Endothelial cell of umbilical vein (primary cell): ENCODE measurements at regions of chr2 and their contacts with region 1.

Region 1: DNA sequence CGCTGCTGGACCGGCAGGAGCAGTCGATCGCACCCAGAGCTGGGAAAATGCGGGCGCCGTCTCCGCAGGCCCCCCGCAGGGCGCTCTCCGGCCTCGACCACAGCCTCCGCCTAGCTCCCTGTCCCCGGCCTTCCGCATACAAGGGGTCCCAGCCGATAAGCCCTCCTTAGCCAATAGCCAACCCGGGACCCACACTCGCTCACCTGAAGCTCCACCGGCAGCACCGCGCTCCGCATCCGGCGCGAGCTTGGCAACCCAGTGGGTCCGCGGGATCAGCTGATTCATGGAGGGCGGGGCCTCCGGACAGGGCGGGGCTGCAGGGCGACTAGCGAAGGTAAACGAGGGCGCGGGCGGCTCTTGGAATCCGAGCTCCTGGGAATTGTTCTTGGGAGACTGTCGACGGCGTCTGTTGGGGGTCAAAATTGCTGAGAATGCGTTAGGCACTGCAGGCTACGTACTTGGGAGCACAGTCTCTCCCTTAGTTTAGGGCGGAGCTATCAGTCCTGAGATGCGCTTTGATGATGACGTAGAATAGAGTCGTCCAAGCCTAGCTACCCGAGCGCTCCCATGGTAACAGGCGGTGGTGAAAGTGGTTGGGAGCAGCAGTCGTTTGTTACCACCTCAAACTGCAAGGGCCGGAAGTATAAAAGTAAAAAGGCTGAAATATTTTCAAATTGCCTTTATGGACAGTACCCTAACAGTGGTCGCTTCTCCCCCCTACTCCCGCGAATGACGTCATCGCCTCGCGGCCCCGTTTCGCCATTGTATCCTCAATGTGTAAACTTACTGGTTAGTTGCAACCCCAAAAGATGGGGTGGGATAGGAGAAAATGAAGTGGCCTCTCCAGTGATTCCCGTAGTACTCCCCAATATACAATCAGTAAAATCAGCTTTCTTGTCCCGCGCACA is at the start of gene ALS2:
- DNase-seq: peak; percentile 99
- H3K4me3 ChIP-seq: peak within 1 kb of the TSS; percentile 49 to 90 (median 79)
- H3K27ac ChIP-seq: peak within 1 kb of the TSS; percentile 14
- H3K4me1 ChIP-seq: peaks cover 32% of the 10 kb centered on the region
- H3K27me3 ChIP-seq: peaks cover 0 to 10% of the 10 kb centered on the region in 2 experiments
- CTCF ChIP-seq: no peak
- POLR2A ChIP-seq: peak; percentile 89
- total RNA-seq, gene ALS2: 34.6 and 36.1 TPM in 2 replicates

Region 2: DNA sequence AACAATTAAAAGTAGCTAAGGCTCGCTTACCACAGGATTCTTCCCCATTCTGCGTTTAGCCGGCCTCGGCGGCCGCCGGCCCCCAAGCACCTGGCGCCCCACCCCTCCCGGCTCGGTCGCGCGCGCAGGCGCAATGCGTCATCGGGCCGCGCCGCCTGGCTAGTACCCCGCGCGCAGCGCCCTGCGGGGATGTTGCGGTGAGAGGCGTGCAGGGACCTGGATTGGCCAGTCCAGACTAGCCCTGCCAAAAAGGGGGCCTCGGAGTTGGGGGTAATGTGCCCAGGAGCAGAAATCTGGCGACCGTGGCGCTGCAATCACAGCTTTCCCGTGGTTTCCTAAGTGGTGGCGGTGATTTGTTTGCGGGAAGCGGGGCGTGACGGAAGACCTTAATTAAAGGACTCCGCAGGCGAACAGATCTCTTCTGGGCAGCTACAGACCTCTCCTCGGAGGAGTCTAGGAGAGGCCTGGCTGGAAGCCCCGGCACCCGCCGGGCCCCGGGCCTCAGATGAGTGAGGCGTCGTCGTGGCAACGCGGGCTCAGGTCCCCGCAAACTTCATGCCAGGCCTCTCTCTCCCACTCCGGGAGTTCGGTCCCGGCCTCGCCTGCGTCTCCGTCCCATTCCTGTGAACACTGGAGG is 138.2 kb before region 1 on chr2:
- CTCF ChIA-PET with region 1: no interaction called
- POLR2A ChIA-PET with region 1: no interaction called
- dilution Hi-C with region 1: no loop called
- intact Hi-C with region 1: loop called (anchors 5 kb)
- DNase-seq: peak; percentile 85
- H3K4me3 ChIP-seq: peak overlapping the region; percentile 62 to 93 (median 77)
- H3K27ac ChIP-seq: peak overlapping the region; percentile 87
- H3K4me1 ChIP-seq: peaks cover 12% of the 10 kb centered on the region
- H3K27me3 ChIP-seq: no peaks in the 10 kb centered on the region
- CTCF ChIP-seq: peak in 1 of 2 donors; percentile 7
- POLR2A ChIP-seq: peak; percentile 74

Region 3: GRCh38 chr2:201733544-201733943 is 47.4 kb before region 1 on chr2:
- CTCF ChIA-PET with region 1: interaction called, 3 read pairs
- POLR2A ChIA-PET with region 1: no interaction called
- dilution Hi-C with region 1: no loop called
- intact Hi-C with region 1: loop called (anchors 5 kb)
- DNase-seq: peak; percentile 86
- H3K4me3 ChIP-seq: peak overlapping the region in 1 of 3 experiments; percentile 40
- H3K27ac ChIP-seq: peak overlapping the region; percentile 23
- H3K4me1 ChIP-seq: peaks cover 38% of the 10 kb centered on the region
- H3K27me3 ChIP-seq: no peaks in the 10 kb centered on the region
- CTCF ChIP-seq: no peak
- POLR2A ChIP-seq: no peak

Region 4: DNA sequence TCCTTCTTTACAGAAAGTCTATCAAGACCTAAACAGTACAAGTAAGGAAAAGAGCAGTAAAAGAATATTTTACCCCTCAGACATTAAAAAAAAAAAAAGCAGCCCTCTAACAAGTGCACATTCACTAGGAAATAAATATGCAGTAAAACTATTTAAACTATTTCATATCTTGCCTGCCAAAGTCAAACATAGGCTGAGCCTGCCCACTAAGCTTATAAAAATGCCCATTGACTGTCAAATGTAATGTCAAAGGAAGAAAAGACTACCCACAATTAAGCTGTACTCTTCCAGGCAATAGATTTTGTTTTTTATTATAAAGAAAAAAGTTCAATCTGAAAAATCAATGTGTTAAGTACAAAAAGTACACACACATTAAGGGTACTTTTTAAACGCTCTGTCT is 12.0 kb before region 1 on chr2:
- CTCF ChIA-PET with region 1: interaction called, 14 read pairs
- POLR2A ChIA-PET with region 1: interaction called, 4 read pairs
- dilution Hi-C with region 1: no loop called
- intact Hi-C with region 1: no loop called
- DNase-seq: no peak
- H3K4me3 ChIP-seq: no peak overlapping the region
- H3K27ac ChIP-seq: no peak overlapping the region
- H3K4me1 ChIP-seq: peaks cover 8% of the 10 kb centered on the region
- H3K27me3 ChIP-seq: no peaks in the 10 kb centered on the region
- CTCF ChIP-seq: no peak
- POLR2A ChIP-seq: no peak